Dorsolateral prefrontal cortex (tissue), 120 donors: ENCODE measurements at regions of chr6 and their contacts with region 1.

Region 1: DNA sequence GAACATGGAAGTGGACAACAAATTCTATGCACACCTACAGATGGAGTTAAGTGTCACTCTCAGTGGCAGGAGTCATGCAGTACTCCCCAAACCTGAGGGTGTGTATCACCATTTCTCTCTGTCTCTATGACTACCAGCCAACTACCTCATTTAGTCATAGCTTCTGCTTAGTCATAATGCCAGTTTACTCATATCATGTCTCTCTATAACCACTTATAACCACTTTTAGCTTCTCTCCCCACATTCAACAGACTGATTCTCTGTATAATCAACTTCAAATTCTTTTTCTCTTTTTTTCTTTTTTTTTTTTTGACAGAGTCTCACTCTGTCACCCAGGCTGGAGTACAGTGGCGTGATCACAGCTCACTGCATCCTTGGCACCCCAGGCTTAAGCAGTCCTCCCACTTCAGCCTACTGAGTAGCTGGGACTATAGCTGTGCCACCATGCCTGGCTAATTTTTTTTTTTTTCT is 13.8 kb upstream of the GTF3C6 start:
- DNase-seq: peak in 5 of 10 donors; percentile 7 to 61 (median 42)
- H3K4me3 ChIP-seq: no peak overlapping the region
- H3K27ac ChIP-seq: peak overlapping the region in 7 of 59 donors; percentile 21 to 80 (median 46)
- H3K27me3 ChIP-seq: no peaks in the 10 kb centered on the region
- CTCF ChIP-seq: no peak

Region 2: GRCh38 chr6:110185879-110186278 is 758.8 kb before region 1 on chr6:
- intact Hi-C with region 1: no loop called
- DNase-seq: no peak
- H3K4me3 ChIP-seq: peak overlapping the region in 22 of 59 donors; percentile 1 to 29 (median 15)
- H3K27ac ChIP-seq: peak overlapping the region in 21 of 59 donors; percentile 2 to 55 (median 21)
- H3K27me3 ChIP-seq: no peaks in the 10 kb centered on the region
- CTCF ChIP-seq: no peak

Region 3: DNA sequence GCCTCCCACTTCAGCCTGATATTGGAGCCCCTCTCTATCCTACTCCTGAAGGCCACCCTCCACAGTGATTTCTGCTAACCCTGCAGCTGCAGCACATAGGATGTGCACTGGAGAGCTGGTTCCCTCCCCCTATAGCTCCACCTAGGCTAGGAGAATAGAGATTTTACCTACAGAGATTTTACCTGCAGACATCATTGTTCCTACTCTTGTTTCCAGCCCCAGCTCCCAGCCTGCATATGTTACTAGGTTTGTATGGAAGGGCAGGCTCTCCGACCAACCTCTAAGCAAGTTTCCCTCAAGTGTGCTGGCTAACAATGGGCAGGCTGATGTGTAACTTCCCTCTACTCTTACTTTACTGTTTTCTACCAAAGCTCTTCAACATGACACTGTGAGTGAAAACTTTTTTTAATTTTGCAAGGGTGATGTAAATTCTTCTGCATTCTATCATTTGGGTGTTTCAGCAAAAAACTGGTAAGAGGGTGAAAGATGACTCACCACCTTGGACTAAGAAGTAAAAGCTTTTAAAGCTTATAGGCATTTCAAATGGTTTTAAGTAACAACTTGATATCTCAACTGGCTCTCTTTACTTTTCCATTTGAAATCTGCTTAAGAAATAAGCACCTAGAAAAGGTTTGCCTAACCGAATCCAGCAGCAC is 236.3 kb before region 1 on chr6:
- intact Hi-C with region 1: loop called in 1 of 2 experiments (anchors 10 kb)
- DNase-seq: no peak
- H3K4me3 ChIP-seq: no peak overlapping the region
- H3K27ac ChIP-seq: peak overlapping the region in 32 of 59 donors; percentile 0 to 72 (median 30)
- H3K27me3 ChIP-seq: no peaks in the 10 kb centered on the region
- CTCF ChIP-seq: no peak

Region 4: DNA sequence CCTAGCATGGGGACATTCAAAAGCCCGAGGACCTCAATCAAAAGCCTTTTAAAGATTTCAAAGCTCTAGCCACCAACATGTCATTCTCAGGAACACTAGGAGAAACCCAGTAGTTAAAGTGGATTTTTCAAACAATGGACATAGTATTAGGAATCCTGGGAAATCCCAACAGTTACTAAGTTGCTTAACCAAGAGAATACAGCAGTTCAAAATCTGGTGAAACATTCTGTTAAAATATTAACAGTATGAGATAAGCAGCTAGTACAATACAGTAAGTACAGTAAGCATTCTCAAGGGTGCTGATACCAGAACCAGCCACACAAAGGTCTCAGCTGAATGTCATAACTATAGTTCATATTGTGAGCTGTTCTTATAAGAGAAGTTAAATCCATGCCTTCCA is 198.0 kb before region 1 on chr6:
- intact Hi-C with region 1: no loop called
- DNase-seq: no peak
- H3K4me3 ChIP-seq: no peak overlapping the region
- H3K27ac ChIP-seq: peak overlapping the region in 22 of 59 donors; percentile 1 to 73 (median 26)
- H3K27me3 ChIP-seq: no peaks in the 10 kb centered on the region
- CTCF ChIP-seq: no peak

Region 5: GRCh38 chr6:110897433-110897832 is 47.3 kb before region 1 on chr6:
- intact Hi-C with region 1: loop called in 1 of 2 experiments (anchors 5 kb)
- DNase-seq: no peak
- H3K4me3 ChIP-seq: no peak overlapping the region
- H3K27ac ChIP-seq: peak overlapping the region in 1 of 59 donors; percentile 13
- H3K27me3 ChIP-seq: no peaks in the 10 kb centered on the region
- CTCF ChIP-seq: no peak